Head of caudate nucleus (tissue), 42 donors: ENCODE measurements at regions of chr4 and their contacts with region 1.

Region 1: GRCh38 chr4:15149839-15150476 is 147.7 kb downstream of the CPEB2 start:
- DNase-seq: peak; percentile 73 to 97 (median 92)

Region 2: GRCh38 chr4:15001869-15002658 is 147.9 kb before region 1 on chr4 and contains the start of gene CPEB2:
- intact Hi-C with region 1: loop called (anchors 2 kb)
- DNase-seq: peak; percentile 92 to 98 (median 96)

Region 3: GRCh38 chr4:15043226-15043625 is 106.7 kb before region 1 on chr4:
- intact Hi-C with region 1: loop called (anchors 10 kb)
- DNase-seq: peak in 12 of 42 donors; percentile 33 to 78 (median 48)

Region 4: DNA sequence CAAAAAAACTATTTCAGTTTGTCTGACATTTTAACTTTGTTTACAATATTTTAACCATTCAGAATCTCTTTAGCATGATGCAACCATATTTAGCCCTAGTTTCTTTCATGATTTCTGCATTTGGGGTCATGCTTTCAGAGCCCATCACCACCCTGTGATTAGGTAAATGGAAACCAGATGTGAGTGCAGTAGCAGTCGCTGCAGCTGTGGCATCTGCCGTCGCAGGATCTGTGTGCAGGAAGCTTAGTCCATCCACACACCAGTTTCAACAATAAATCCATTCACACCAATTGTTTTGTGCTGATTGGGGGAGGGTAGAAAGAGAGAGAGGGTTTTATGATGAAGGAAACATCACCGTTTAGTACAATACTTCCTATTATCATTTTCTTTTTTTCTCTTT is 17.2 kb before region 1 on chr4:
- intact Hi-C with region 1: loop called (anchors 2 kb)
- DNase-seq: peak in 40 of 42 donors; percentile 39 to 89 (median 71)